Left cardiac atrium (tissue), 4 donors: ENCODE measurements at regions of chr9 and their contacts with region 1.

Region 1: GRCh38 chr9:122125158-122125508 is 32.0 kb upstream of the TTLL11 start:
- DNase-seq: peak; percentile 79
- ATAC-seq: peak; percentile 82 to 89

Region 2: DNA sequence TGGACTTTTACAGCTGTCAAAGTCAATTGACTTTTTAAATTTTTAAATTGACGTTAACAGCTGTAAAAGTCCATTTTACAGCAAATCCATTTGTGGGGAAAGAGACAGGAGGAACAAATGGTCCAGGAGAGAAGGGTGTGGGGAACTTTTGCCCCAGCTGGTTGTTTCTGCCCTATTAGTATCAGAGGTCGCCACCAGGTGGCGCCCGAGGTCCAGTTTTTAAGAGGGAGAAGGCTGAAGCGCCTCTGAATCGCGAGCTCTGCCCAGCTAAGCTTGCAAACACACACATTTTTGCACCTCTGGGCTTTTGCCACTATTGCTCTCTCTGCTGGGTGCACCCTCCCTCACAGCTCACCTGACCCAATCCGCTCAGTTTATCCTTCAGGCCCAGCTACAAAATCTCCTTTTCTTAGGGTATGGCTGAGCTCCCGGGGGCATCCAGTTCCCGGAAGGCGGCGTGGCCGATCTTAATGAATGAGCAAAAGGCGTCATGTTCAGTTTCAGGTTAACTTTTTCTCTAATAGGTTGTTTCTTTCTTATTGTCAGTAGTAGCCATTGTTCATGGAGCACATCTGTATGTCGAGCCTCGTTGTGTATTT is 25.8 kb before region 1 on chr9:
- intact Hi-C with region 1: loop called in 1 of 2 experiments (anchors 1 kb)
- DNase-seq: peak; percentile 87
- ATAC-seq: peak; percentile 83 to 92

Region 3: GRCh38 chr9:122168356-122168755 is 43.2 kb after region 1 on chr9:
- intact Hi-C with region 1: no loop called
- DNase-seq: no peak
- ATAC-seq: no peak

Region 4: GRCh38 chr9:122252796-122253195 is 127.7 kb after region 1 on chr9:
- intact Hi-C with region 1: loop called in 1 of 2 experiments (anchors 10 kb)
- DNase-seq: no peak
- ATAC-seq: peak; percentile 50 to 53

Region 5: GRCh38 chr9:122350638-122351355 is 225.7 kb after region 1 on chr9:
- intact Hi-C with region 1: loop called in 1 of 2 experiments (anchors 1 kb)
- DNase-seq: peak; percentile 82
- ATAC-seq: peak; percentile 80 to 81

Region 6: DNA sequence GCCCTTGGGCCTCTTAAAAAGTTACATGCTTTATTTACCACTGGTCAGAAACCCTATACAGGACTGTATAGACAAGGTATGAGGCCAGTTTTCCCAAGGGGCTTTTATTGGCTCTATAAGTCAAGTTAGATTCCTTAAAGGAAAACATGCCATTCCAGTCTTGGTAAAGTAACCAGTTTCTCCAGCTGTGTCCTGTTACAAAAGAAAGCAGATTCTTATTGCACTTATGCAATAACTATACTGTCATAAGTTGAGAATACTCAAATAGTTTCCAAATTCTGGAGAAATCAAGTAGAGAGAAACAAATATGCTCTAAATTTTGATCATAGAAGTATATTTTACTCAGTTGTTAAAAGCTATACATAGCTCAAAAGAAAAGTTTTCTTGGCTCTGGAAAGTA is 292.9 kb after region 1 on chr9:
- intact Hi-C with region 1: no loop called
- DNase-seq: no peak
- ATAC-seq: no peak

Region 7: GRCh38 chr9:122810306-122810946 is 685.3 kb after region 1 on chr9:
- intact Hi-C with region 1: loop called in 1 of 2 experiments (anchors 10 kb)
- DNase-seq: peak; percentile 66
- ATAC-seq: peak; percentile 90 to 91

Region 8: GRCh38 chr9:122954253-122954691 is 829.1 kb after region 1 on chr9:
- intact Hi-C with region 1: no loop called
- DNase-seq: no peak
- ATAC-seq: peak in 1 of 2 donors; percentile 84